Endothelial cell of umbilical vein (primary cell): ENCODE measurements at regions of chr4 and their contacts with region 1.

Region 1: DNA sequence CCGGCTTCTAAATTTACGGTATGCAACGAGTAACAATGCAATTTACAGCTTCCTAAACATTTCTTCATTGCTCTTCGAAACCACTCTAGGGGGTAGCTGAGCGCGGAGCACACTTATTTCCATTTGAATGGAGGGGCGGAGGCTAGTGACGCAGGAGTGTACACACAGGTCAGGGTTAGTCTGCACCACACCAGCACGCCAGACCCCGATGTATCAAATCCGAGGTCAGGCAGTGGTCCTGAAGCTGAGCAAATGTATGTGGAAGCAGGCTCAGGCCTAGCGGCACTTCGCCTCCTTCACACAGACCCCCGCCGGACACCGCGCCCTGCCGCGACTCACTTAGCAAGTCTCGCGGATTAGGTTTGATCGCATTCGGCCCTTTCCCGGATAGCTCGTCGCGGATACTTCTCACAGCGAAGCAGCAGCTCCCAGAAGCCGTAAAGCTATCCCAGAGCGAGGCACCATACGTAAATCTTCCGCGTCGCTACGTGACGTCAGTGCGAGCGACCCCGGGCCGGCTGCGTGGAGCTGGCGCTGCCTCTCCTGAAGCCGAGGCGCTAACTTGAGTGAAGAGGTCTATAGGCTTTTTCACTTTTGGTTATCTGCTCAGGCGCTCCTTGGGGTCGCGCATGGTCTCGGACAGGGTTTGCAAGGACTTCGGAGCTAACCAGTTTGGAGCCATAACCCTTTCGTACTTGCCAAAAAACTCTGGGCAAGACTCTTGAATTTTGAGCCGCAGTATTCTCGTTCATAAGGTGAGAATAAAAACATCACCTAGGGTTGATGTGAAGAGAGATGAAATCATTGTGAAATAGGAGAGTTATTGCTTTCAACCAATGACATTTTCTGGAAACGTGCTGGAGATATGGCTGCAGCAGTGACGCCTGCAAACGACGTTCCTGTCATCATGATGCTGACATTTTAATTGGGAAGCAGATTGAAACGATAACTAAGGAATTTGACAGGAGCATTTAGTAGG is at the start of gene AASDH:
- DNase-seq: peak; percentile 98
- H3K4me3 ChIP-seq: peak within 1 kb of the TSS; percentile 67 to 92 (median 91)
- H3K27ac ChIP-seq: peak within 1 kb of the TSS; percentile 73
- H3K4me1 ChIP-seq: peaks cover 13% of the 10 kb centered on the region
- H3K27me3 ChIP-seq: no peaks in the 10 kb centered on the region
- CTCF ChIP-seq: no peak
- POLR2A ChIP-seq: peak; percentile 84
- total RNA-seq, gene AASDH: 6.9 and 9.5 TPM in 2 replicates

Region 2: DNA sequence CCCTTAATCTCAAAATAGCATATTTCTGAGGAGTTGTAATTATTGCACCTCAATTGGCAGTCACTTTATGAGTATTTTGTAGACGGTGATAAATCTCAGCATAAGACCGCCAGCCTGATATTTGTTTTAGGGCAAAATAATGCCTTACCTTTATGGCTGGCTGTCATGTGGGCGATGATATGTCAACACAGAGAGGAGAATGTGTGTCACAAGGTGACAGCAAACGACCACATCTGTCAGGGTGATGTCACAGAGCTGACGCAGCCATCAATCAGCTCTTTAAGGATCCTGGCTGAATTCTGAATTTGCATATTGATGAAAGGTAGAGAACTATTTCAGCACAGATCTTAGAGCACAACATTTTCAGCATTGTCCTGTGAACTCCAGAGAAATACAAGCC is 228.8 kb before region 1 on chr4:
- CTCF ChIA-PET with region 1: no interaction called
- POLR2A ChIA-PET with region 1: no interaction called
- dilution Hi-C with region 1: no loop called
- intact Hi-C with region 1: no loop called
- DNase-seq: no peak
- H3K4me3 ChIP-seq: no peak overlapping the region
- H3K27ac ChIP-seq: no peak overlapping the region
- H3K4me1 ChIP-seq: no peaks in the 10 kb centered on the region
- H3K27me3 ChIP-seq: no peaks in the 10 kb centered on the region
- CTCF ChIP-seq: no peak
- POLR2A ChIP-seq: no peak

Region 3: DNA sequence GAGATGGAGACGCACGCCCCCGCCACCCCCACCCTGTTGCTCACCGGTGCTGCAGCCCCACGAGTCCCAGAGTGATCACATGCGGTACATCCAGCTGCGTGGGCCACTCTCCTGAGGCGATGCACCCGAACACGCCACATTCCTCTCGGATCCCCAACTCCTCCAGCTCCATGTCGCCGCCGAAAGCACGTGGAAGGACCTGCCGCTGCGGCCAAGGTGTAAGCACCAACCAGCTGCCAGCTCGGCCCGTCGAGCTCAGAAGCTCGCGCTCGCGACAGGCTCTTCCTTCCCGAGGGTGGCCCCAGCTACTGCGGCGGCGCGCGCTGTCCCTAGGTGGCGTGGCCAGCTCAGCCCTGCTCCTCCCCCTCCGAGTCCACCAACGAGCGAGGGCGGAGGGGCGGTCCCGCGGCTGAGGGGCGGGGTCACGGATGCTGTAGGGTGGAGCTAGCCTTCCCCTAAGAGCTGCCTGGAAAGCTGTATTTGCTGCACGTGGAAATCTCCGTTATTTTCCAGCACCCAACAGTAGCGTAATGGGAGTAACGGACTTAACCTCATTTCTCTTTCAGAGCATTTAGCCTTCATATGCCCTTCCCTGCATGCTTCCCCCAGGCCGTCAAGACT is 48.1 kb after region 1 on chr4 and contains the start of gene PPAT:
- CTCF ChIA-PET with region 1: interaction called, 9 read pairs
- POLR2A ChIA-PET with region 1: interaction called, 15 read pairs
- dilution Hi-C with region 1: no loop called
- intact Hi-C with region 1: loop called (anchors 1 kb)
- DNase-seq: peak; percentile 100
- H3K4me3 ChIP-seq: peak within 1 kb of the TSS; percentile 77 to 86 (median 83)
- H3K27ac ChIP-seq: peak within 1 kb of the TSS; percentile 87
- H3K4me1 ChIP-seq: peaks cover 19% of the 10 kb centered on the region
- H3K27me3 ChIP-seq: no peaks in the 10 kb centered on the region
- CTCF ChIP-seq: peak in 1 of 2 donors; percentile 25
- POLR2A ChIP-seq: peak; percentile 83
- total RNA-seq, gene PPAT: 21.8 and 25.5 TPM in 2 replicates